Natural killer cell (primary cell): ENCODE measurements at regions of chr12 and their contacts with region 1.

Region 1: DNA sequence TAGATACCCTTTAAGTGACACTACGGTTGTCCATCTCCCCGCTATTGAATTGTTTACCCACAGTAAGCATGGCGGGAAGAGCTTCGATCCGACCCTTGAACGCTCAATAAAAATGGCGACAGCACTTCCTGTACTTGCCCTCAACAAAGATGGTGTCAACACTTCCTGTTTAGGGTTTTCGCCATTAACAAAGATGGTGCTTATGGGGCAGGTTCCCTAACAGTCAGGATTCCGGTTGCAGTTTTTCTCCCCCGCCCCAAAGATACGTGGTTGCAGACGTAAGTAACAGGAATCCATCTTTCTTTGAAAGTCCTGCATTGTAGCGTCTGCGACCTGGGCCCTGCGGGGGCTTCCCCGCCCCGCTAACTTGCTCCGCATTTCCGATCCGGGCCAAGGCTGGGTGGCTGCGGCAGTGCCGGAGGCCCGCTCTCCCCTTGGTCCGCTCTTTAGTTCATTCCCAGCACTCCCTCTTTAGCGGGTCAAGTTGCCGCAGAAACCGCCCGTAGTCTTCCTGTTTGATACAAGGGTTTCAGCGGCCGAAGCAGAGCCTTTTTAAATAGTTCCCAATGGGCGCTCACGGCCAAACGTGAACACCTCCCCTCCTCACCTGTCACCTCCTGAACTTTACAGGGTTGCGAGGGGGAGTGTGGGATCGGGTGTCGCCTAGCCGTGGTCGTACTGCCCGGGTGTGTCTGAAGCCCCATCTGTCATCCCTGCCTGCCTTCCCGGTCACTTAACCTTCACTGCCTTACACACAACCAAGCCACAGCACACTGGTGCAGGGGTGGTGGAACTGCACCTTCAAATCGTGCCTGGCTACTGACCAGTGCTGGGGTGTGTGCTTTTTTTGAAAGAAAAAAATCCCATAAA is at the start of gene CRADD:
- DNase-seq: peak; percentile 80 to 99
- ATAC-seq: peak; percentile 91 to 98 (median 93)
- H3K4me3 ChIP-seq: peak within 1 kb of the TSS; percentile 90
- H3K4me3 Mint-ChIP-seq: peak within 1 kb of the TSS; percentile 97
- H3K27ac ChIP-seq: peak within 1 kb of the TSS; percentile 98
- H3K27ac Mint-ChIP-seq: peak within 1 kb of the TSS; percentile 99 to 100
- H3K4me1 ChIP-seq: peaks cover 12% of the 10 kb centered on the region
- H3K4me1 Mint-ChIP-seq: peaks cover 33 to 46% of the 10 kb centered on the region in 2 donors
- H3K27me3 ChIP-seq: no peaks in the 10 kb centered on the region
- H3K27me3 Mint-ChIP-seq: no peaks in the 10 kb centered on the region
- CTCF ChIP-seq: no peak
- total RNA-seq, gene CRADD: 19.1 to 27.5 (median 26.4) TPM

Region 2: DNA sequence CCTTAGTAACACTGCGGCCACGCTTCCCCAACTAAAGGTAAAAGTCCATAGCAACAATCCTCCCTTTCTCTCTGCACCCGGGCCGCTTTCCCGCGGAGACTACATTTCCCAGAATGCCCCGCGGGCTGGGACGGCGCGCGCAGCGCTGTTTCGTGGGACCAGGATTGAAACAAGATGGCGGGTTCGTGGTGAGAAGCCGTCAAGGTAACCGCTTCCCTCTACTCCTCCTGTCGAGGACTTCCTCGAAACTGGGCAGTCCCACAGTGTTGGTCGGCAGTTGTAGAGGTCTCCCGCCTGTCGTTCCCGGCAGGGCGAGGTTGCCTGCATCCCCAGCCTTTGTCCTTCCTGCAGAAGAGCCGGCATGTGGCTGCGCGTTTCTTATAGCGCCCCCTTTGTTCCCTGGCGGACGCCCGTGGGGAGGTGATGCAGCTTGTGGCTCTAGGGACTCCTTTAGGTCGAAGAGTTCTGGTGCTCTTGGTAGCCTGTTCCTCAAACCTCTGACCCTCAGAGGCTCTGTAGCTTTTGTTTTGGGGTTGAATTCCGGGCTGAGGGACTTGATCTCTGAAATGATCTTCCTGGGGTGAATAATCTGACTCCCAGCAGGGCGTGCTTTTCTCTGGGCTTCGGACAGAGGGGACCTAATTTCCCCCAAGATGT is 210.0 kb before region 1 on chr12 and contains the start of gene MRPL42:
- intact Hi-C with region 1: loop called (anchors 2 kb)
- DNase-seq: peak; percentile 94 to 95
- ATAC-seq: peak; percentile 94 to 95 (median 95)
- H3K4me3 ChIP-seq: peak within 1 kb of the TSS; percentile 62
- H3K4me3 Mint-ChIP-seq: peak within 1 kb of the TSS; percentile 90
- H3K27ac ChIP-seq: peak within 1 kb of the TSS; percentile 67
- H3K27ac Mint-ChIP-seq: peak within 1 kb of the TSS; percentile 91 to 94
- H3K4me1 ChIP-seq: peaks cover 8% of the 10 kb centered on the region
- H3K4me1 Mint-ChIP-seq: peaks cover 22 to 27% of the 10 kb centered on the region in 2 donors
- H3K27me3 ChIP-seq: no peaks in the 10 kb centered on the region
- H3K27me3 Mint-ChIP-seq: peaks cover 0 to 3% of the 10 kb centered on the region in 2 donors
- CTCF ChIP-seq: peak; percentile 84
- total RNA-seq, gene MRPL42: 36.4 to 42.7 (median 37.1) TPM

Region 3: GRCh38 chr12:93569656-93570551 is 107.5 kb before region 1 on chr12:
- intact Hi-C with region 1: loop called (anchors 1 kb)
- DNase-seq: peak; percentile 66 to 85
- ATAC-seq: peak; percentile 40 to 63 (median 46)
- H3K4me3 ChIP-seq: peak overlapping the region; percentile 95
- H3K4me3 Mint-ChIP-seq: peak overlapping the region; percentile 95
- H3K27ac ChIP-seq: peak overlapping the region; percentile 80
- H3K27ac Mint-ChIP-seq: peak overlapping the region; percentile 86 to 89
- H3K4me1 ChIP-seq: peaks cover 26% of the 10 kb centered on the region
- H3K4me1 Mint-ChIP-seq: peaks cover 31 to 38% of the 10 kb centered on the region in 2 donors
- H3K27me3 ChIP-seq: peaks cover 5% of the 10 kb centered on the region
- H3K27me3 Mint-ChIP-seq: peaks cover 0 to 4% of the 10 kb centered on the region in 2 donors
- CTCF ChIP-seq: peak; percentile 72

Region 4: GRCh38 chr12:93742110-93742934 is 64.9 kb after region 1 on chr12:
- intact Hi-C with region 1: loop called (anchors 2 kb)
- DNase-seq: peak; percentile 60 to 73
- ATAC-seq: peak; percentile 95 to 96 (median 95)
- H3K4me3 ChIP-seq: peak overlapping the region; percentile 88
- H3K4me3 Mint-ChIP-seq: peak overlapping the region; percentile 98
- H3K27ac ChIP-seq: peak overlapping the region; percentile 77
- H3K27ac Mint-ChIP-seq: peak overlapping the region; percentile 93 to 96
- H3K4me1 ChIP-seq: peaks cover 7% of the 10 kb centered on the region
- H3K4me1 Mint-ChIP-seq: peaks cover 22 to 38% of the 10 kb centered on the region in 2 donors
- H3K27me3 ChIP-seq: no peaks in the 10 kb centered on the region
- H3K27me3 Mint-ChIP-seq: no peaks in the 10 kb centered on the region
- CTCF ChIP-seq: peak; percentile 30

Region 5: DNA sequence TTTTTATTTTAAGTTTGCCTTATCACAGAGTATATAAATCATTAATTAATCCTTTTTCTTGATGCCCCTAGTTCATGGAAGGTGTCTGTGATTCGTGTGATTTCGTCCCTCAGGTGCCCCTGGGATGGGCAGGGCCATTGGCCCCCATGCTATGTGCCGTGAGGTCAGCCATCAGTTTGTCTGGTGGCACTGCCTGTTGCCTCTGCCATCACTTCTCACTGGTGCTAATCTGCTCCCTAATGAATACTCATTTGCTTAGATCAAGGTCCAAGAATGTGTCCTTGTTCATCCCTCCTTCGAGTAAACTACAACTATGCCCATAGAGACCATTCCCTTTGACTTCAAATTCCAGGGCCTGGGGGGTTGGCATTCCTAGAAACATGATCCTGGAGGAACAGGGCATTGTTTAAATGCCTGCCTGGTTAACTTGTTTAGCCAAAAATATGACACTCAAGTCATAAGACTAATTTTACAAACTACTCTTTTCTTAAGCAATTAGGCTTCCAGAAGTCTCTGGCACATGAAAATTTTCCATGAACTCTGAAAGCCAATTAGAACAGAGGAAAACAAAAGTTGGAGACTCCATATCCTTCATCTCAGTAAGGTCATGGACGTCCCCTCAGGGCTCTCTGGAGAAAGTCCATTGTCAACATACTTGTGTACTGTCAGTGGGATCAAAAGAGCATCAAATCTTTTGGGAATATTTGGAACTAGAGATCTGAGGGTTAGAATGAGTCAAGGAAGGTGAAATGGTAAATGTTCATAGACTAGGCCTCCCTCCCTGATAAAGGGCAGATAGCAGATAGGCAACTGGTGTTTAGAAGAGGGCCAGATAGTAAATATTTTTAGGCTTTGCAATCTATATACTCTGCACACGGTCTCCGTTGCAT is 380.1 kb after region 1 on chr12:
- intact Hi-C with region 1: no loop called
- DNase-seq: no peak
- ATAC-seq: no peak
- H3K4me3 ChIP-seq: no peak overlapping the region
- H3K4me3 Mint-ChIP-seq: no peak overlapping the region
- H3K27ac ChIP-seq: no peak overlapping the region
- H3K27ac Mint-ChIP-seq: no peak overlapping the region
- H3K4me1 ChIP-seq: no peaks in the 10 kb centered on the region
- H3K4me1 Mint-ChIP-seq: no peaks in the 10 kb centered on the region
- H3K27me3 ChIP-seq: no peaks in the 10 kb centered on the region
- H3K27me3 Mint-ChIP-seq: peaks cover 0 to 15% of the 10 kb centered on the region in 2 donors
- CTCF ChIP-seq: no peak

Region 6: GRCh38 chr12:95217377-95218149 is 1540.1 kb after region 1 on chr12 and contains the starts of genes FGD6 and VEZT:
- intact Hi-C with region 1: loop called (anchors 10 kb)
- DNase-seq: peak; percentile 93 to 98
- ATAC-seq: peak; percentile 93 to 98 (median 94)
- H3K4me3 ChIP-seq: peak within 1 kb of the TSS; percentile 95
- H3K4me3 Mint-ChIP-seq: peak within 1 kb of the TSS; percentile 100
- H3K27ac ChIP-seq: peak within 1 kb of the TSS; percentile 85
- H3K27ac Mint-ChIP-seq: peak within 1 kb of the TSS; percentile 91 to 97
- H3K4me1 ChIP-seq: peaks cover 10% of the 10 kb centered on the region
- H3K4me1 Mint-ChIP-seq: peaks cover 27 to 31% of the 10 kb centered on the region in 2 donors
- H3K27me3 ChIP-seq: peaks cover 5% of the 10 kb centered on the region
- H3K27me3 Mint-ChIP-seq: peaks cover 6 to 9% of the 10 kb centered on the region in 2 donors
- CTCF ChIP-seq: peak; percentile 63
- total RNA-seq, gene FGD6: 1.5 to 1.9 (median 1.9) TPM
- total RNA-seq, gene VEZT: 32.7 to 37.0 (median 35.1) TPM